Right ventricle myocardium inferior (tissue), 1 donor: ENCODE measurements at regions of chr2 and their contacts with region 1.

Region 1: DNA sequence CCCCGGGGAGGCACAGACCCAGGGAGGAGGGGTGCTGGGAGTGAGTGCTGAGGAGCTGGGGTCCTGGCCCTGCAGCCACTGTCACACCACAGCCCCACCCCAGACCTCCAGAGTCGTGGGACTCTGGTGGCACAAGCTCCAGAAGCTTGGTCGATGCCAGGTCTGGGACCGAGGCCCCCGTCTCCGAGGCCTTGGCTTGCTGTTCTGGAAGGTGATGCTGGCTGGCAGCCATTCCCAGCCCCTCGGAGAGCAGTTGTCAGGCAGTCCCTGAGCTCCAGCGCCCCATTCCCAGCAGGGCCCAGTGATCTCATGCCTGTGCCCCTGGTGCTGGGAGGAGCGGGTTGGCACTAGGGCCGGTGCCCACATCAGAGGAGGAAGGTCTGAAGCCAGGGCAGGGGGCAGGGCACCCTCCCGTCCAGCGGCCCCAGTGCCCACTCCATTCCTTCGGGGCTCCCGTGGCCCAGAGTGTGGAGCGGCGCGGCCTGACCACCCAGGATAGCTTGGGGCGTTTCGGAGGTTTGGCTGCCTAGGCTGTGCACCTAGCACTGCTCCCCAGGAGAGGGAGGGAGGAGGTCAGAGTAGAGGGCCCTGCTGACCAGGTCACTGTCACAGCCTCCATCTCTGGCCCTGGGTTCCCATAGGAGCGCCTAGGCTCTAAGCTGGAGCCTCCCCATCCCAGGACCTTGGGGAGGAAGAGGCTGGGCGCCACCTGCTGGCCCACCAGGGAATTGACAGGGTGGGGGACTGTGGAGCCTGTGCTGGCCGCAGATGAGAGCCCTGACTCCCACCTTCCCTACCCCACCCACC is 16.8 kb upstream of the ALPI start:
- DNase-seq: no peak
- ATAC-seq: peak; percentile 60

Region 2: GRCh38 chr2:232327105-232328041 is 111.8 kb before region 1 on chr2:
- intact Hi-C with region 1: loop called (anchors 10 kb)
- DNase-seq: peak; percentile 89
- ATAC-seq: peak; percentile 42

Region 3: DNA sequence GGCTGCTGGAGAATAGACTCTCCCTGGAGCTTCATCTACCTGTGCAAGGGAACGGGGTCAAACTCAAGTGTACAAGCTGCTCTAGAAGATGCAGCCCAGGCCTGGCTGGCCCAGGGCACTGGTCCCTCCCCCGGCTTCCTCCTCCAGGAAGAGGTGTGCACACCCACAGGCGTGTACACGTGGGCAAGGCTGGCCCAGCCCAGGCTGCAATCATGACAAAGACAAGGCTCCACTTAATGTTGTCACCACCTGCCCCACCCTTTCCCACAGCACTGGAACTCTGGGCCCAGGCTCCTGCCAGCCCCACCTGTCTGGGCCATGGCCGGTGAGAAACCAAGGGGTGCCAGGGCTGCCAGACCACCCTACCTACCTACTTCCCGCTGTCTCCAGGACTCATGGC is 90.2 kb before region 1 on chr2:
- intact Hi-C with region 1: no loop called
- DNase-seq: no peak
- ATAC-seq: no peak